Heart left ventricle (tissue), 16 donors: ENCODE measurements at regions of chr7 and their contacts with region 1.

Region 1: DNA sequence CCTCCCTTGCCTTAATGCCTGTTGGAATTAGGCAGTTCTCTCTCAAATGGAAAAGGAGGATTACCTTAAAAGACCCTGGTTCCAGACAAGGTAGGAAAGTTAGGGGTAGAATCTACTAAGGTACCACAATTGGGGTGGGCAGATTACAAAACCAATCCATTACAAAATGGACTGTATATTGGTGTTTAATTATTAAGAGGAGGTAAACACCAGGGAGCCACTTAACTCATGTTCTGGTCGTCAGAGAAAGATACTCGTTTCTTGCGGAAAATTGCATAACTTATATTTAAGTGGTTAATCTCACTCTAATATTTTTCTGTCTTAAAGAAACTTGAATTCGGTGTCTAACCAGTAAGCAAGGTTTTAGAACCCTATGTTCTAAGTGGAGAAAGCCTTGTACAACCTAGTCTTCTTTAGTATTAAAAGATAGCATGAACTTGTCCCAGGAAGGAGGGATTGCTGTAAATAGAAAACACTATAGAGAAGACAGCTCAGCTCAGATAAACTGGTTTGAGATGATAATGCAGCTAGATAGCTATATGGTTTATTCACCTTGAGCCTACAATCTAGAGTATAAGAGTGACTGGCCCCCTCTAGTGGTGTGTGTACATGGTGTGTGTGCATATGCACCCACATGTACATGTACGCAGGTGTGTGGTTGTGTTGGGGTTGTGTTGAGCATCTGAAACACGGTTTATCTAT is 58.0 kb upstream of the STRIP2 start:
- DNase-seq: no peak
- ATAC-seq: peak in 2 of 4 donors; percentile 54 to 62
- H3K4me3 ChIP-seq: no peak overlapping the region
- H3K27ac ChIP-seq: no peak overlapping the region
- H3K4me1 ChIP-seq: peaks cover 0 to 8% (median 0%) of the 10 kb centered on the region in 12 donors
- H3K27me3 ChIP-seq: no peaks in the 10 kb centered on the region
- CTCF ChIP-seq: peak; percentile 27 to 60 (median 43)
- POLR2A ChIP-seq: no peak

Region 2: DNA sequence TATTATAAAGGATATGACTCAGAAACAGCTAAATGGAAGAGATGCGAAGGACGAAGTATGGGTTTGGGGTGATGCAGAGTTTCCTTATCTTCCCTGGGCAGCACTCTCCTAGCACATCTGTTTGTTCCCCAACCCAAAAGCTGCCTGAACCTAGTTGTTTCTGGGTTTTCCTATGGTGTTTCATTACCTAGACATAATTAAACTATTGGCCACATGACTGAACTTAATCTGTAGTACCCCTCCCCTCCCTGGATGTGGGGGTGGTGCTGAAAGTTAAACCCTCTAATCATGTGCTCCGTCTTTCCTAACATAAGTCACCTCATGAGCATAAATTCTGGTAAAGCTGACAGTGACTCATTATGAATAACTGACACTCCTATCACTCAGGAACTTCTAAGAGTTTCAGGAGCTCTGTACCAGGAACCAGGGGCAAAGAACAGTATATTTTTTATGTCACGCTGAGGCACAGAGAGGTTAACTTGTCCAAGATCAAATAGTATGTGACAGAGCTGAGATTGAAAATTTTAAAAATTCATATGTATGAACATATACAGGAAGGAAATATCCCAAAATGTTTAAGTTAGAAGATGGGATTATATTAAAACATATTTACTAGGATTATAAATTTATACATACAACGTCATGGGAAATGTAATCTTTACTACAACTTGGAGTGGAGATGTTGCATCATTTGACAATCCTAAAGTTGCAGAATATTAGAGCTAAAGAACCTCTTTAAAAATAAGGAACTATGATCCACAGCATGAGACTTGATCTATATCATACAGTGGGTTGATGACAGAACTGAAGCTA is 62.8 kb after region 1 on chr7:
- intact Hi-C with region 1: no loop called
- DNase-seq: no peak
- ATAC-seq: no peak
- H3K4me3 ChIP-seq: no peak overlapping the region
- H3K27ac ChIP-seq: peak overlapping the region in 2 of 12 donors; percentile 37 to 39
- H3K4me1 ChIP-seq: peaks cover 0 to 26% (median 7%) of the 10 kb centered on the region in 12 donors
- H3K27me3 ChIP-seq: peaks cover 0 to 19% (median 0%) of the 10 kb centered on the region in 9 donors
- CTCF ChIP-seq: no peak
- POLR2A ChIP-seq: no peak

Region 3: GRCh38 chr7:129816742-129817141 is 440.5 kb after region 1 on chr7:
- intact Hi-C with region 1: loop called in 1 of 10 experiments (anchors 10 kb)
- DNase-seq: no peak
- ATAC-seq: no peak
- H3K4me3 ChIP-seq: no peak overlapping the region
- H3K27ac ChIP-seq: no peak overlapping the region
- H3K4me1 ChIP-seq: peaks cover 0 to 5% (median 0%) of the 10 kb centered on the region in 12 donors
- H3K27me3 ChIP-seq: no peaks in the 10 kb centered on the region
- CTCF ChIP-seq: no peak
- POLR2A ChIP-seq: no peak